Activated CD4-positive, alpha-beta memory T cell treated with anti-CD3 and anti-CD28 coated beads for 36 hours (primary cell): ENCODE measurements at regions of chr10 and their contacts with region 1.

Region 1: GRCh38 chr10:77710759-77711682 is 73.4 kb upstream of the KCNMA1 start:
- DNase-seq: peak; percentile 79
- H3K4me3 Mint-ChIP-seq: no peak overlapping the region
- H3K27ac Mint-ChIP-seq: no peak overlapping the region
- H3K4me1 Mint-ChIP-seq: peaks cover 11% of the 10 kb centered on the region
- H3K27me3 Mint-ChIP-seq: peaks cover 19% of the 10 kb centered on the region

Region 2: DNA sequence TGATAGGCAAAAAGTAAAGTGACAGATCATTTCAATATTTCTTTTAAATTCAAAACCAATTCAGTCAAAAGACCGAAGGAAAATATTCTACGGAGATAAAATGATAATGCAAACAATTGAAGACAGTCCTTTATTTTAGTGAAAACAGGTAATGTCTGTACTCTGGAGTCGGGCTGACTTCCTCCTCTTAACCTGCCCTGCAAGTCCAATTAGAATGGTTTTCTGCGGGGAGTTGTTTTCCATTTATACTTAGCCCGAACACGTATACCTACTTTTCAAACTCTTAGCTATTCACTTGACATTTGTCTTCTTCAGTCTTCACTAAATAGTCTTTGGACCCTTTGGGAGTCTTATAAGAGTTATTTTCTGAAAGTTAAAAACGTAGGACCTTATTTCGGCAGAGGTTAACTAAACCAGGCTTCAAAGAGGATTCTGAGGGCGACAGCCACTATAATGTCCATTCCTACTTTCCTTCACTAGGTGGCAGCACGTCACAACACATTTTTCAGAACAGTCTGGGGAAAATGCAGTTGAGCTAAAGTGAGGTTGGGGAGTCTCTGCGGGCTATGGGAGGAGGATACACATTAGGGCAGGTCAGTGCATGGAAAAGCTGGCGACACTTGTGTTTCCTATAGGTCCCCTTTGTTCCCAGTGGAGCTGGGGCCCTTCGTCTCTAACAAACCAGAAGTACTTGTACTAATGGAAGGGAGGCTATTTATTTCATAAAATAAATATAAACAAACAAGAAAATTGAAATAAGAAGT is 545.4 kb before region 1 on chr10:
- CTCF ChIA-PET with region 1: interaction called, 14 read pairs
- POLR2A ChIA-PET with region 1: no interaction called
- intact Hi-C with region 1: loop called (anchors 1 kb)
- DNase-seq: peak; percentile 50
- H3K4me3 Mint-ChIP-seq: no peak overlapping the region
- H3K27ac Mint-ChIP-seq: no peak overlapping the region
- H3K4me1 Mint-ChIP-seq: peaks cover 3% of the 10 kb centered on the region
- H3K27me3 Mint-ChIP-seq: peaks cover 23% of the 10 kb centered on the region

Region 3: GRCh38 chr10:77641788-77642397 is 69.1 kb before region 1 on chr10:
- CTCF ChIA-PET with region 1: interaction called, 11 read pairs
- POLR2A ChIA-PET with region 1: no interaction called
- intact Hi-C with region 1: no loop called
- DNase-seq: peak; percentile 38
- H3K4me3 Mint-ChIP-seq: no peak overlapping the region
- H3K27ac Mint-ChIP-seq: no peak overlapping the region
- H3K4me1 Mint-ChIP-seq: peaks cover 2% of the 10 kb centered on the region
- H3K27me3 Mint-ChIP-seq: peaks cover 34% of the 10 kb centered on the region

Region 4: DNA sequence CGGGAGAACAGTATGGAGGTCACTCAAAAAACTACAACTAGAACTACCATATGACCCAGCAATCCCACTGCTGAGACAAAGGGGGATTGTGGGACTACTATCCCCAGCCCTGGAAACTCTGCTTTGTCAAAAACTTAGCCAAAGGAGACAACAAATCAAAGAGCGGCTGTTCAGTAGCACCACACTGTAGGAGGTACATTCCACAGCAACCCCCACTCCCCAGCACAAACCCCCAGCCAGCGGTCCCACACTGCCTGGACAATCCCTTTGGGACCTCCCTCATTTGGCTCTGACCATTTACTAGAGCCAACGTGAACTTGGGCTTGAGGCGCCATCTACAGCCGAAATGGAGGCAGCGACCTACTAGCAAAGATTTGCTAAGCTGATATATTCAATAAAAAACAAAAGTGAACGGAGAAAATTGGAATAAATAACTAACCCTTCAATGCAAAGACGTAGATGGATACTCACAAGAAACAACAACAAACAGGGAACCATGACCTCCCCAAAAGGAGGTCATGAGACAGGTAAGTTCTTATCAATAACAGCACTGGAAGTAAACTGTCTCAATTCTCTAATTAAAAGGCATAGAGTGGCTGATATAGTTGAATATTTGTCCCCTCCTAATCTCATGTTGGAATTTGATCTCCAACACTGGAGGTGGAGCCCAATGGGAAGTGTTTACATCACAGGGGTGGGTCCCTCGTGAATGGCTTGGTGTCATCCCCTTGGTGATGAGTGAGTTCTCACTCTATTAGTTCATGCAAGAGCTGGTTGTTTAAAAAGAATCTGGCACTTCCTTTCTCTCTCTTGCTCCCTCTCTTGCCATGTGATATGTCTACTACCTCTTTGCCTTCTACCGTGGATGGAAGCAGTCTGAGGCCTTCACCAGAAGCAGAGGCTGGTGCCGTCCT is 45.6 kb after region 1 on chr10:
- CTCF ChIA-PET with region 1: interaction called, 7 read pairs
- POLR2A ChIA-PET with region 1: no interaction called
- intact Hi-C with region 1: loop called (anchors 5 kb)
- DNase-seq: peak; percentile 40
- H3K4me3 Mint-ChIP-seq: no peak overlapping the region
- H3K27ac Mint-ChIP-seq: no peak overlapping the region
- H3K4me1 Mint-ChIP-seq: no peaks in the 10 kb centered on the region
- H3K27me3 Mint-ChIP-seq: peaks cover 2% of the 10 kb centered on the region

Region 5: DNA sequence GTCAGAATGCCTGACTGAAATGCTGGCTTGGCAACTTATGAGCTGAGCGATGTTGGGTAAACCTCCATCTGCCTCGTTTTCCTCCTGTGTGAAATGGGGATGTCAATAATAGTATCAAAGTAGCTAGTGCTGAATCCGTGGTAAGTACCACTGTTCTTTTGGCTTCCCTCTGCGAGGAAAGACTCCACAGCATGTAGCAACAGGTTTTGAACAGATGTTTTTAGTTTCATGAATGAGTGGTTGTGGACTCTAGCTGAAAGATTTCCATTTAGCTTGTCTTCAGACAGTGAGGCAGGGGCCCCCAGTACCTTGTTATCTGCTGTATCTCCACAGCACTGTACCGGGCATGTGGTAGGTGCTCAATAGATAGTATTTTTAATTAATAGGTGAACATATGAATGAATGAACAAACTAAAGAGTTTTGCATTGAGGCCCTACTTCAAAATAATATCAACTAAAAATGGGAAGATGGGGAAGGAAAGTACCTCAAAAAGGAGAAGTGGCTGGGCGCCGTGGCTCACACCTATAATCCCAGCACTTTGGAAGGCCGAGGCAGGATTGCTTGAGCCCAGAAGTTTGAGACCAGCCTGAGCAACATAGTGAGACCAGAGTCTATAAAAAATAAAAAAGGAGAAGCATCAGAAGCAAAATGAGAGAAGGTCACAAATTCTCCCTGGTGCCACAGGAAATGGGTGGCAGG is 221.1 kb after region 1 on chr10:
- CTCF ChIA-PET with region 1: no interaction called
- POLR2A ChIA-PET with region 1: no interaction called
- intact Hi-C with region 1: no loop called
- DNase-seq: no peak
- H3K4me3 Mint-ChIP-seq: no peak overlapping the region
- H3K27ac Mint-ChIP-seq: no peak overlapping the region
- H3K4me1 Mint-ChIP-seq: peaks cover 5% of the 10 kb centered on the region
- H3K27me3 Mint-ChIP-seq: peaks cover 23% of the 10 kb centered on the region

Region 6: DNA sequence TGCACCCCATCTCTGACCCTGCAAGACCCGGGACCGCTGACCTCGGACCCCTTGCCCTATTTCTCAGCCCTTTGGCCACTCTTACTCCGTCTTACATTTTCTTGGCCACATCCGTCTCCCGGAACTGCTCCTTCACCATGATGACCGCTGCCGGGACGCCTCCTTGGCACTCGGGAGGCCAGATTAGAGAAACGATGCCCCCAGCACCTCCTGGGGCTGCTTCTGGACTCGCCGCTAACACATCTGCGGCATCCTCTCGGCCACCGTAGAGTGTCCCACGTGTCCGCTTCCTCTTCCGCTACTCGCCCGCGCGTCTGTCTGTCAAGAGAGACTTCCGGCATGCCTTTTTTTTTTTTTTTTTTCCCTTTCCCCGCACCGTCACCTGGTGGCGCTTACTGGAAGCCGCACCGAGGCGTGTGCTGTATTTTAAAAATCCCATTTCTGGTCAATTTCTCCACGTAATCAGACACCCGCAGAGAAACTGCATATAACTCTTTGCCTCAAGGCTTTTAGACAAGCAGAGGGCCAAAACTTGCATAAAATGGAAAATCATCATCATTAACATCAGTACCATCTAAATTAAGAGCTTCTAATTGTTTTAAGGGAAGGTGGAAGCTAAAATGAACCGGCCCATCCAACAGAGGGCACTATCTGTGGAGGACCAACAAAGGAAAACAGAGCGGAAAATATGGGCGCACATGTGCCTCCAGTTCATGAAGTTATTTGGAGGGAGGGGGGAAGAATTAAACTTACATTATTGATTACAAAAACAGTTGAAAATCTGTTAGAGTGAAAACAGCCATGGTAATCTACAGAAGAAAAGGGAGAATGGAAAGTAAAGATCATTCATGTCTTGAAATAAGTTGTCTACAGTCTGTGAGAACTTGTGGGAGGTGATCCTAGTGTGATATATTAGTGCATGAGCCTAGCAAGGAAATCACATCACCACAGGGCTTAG is 318.5 kb after region 1 on chr10 and contains the start of gene POLR3A:
- CTCF ChIA-PET with region 1: no interaction called
- POLR2A ChIA-PET with region 1: no interaction called
- intact Hi-C with region 1: loop called (anchors 5 kb)
- DNase-seq: peak; percentile 94
- H3K4me3 Mint-ChIP-seq: peak within 1 kb of the TSS; percentile 99
- H3K27ac Mint-ChIP-seq: peak within 1 kb of the TSS; percentile 93
- H3K4me1 Mint-ChIP-seq: peaks cover 33% of the 10 kb centered on the region
- H3K27me3 Mint-ChIP-seq: no peaks in the 10 kb centered on the region
- total RNA-seq, gene POLR3A: 16.6 to 17.0 TPM

Region 7: DNA sequence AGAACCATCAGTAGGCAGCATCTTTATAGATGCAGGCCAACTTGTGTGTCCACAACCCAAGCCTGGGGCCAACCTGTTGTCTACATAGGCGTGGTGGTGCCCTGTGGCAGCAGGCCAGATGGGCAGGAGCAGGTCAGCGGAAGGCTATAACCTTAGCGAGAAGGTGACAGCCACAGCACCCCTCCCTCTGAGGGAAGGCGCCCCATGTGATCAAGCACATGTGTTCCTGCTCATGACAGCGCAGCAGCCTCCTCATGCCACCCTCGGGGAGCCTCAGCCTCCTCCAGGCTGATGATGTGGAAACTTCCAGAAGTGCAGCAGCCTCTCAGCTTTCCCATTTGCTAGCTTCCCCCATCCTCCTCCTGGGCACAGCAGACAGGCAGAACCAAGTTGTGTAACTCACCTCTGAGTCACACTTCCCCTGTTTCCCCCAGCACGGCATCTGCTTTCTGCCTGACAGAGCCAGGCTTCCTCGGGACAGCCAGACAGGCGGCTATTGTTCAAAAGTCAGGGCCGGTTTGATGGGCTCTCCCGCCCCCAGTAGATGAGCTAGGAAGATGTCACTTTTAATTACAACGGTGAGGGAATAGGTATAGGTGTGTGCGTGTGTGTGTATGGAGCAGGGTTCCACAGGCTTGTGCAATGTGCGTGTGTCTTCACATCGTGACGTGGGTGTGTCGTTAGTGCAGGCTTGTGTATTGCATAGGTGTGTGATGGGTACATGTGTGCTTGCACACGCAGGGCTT is 1045.8 kb after region 1 on chr10:
- CTCF ChIA-PET with region 1: no interaction called
- POLR2A ChIA-PET with region 1: no interaction called
- intact Hi-C with region 1: no loop called
- DNase-seq: peak; percentile 60
- H3K4me3 Mint-ChIP-seq: no peak overlapping the region
- H3K27ac Mint-ChIP-seq: no peak overlapping the region
- H3K4me1 Mint-ChIP-seq: peaks cover 15% of the 10 kb centered on the region
- H3K27me3 Mint-ChIP-seq: peaks cover 19% of the 10 kb centered on the region